PC-3 (cell line): ENCODE measurements at regions of chr2 and their contacts with region 1.

Region 1: DNA sequence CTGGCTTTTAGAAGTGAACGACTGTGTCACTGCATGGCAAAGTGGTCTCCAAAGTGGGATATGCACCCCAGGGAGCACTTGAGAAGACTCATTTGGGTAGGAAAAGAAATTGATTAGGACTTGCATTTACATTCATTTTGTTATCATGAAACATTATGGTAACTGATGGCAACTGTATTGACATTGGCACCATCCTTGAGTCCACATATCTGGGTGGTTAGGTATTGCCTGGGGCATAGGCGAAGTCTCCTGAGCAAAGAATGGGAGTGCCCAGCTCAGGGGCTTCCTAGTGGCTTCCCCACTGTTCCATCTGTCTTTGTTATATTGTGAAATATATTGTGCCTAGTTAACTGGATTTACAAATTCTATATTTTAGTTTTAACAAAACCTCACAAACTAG is 29.2 kb downstream of the SPATS2L start:
- DNase-seq: peak; percentile 90
- ATAC-seq: peak; percentile 89
- H3K4me3 ChIP-seq: no peak overlapping the region
- H3K27ac ChIP-seq: peak overlapping the region; percentile 83
- H3K4me1 ChIP-seq: peaks cover 30% of the 10 kb centered on the region
- H3K27me3 ChIP-seq: no peaks in the 10 kb centered on the region
- CTCF ChIP-seq: no peak

Region 2: DNA sequence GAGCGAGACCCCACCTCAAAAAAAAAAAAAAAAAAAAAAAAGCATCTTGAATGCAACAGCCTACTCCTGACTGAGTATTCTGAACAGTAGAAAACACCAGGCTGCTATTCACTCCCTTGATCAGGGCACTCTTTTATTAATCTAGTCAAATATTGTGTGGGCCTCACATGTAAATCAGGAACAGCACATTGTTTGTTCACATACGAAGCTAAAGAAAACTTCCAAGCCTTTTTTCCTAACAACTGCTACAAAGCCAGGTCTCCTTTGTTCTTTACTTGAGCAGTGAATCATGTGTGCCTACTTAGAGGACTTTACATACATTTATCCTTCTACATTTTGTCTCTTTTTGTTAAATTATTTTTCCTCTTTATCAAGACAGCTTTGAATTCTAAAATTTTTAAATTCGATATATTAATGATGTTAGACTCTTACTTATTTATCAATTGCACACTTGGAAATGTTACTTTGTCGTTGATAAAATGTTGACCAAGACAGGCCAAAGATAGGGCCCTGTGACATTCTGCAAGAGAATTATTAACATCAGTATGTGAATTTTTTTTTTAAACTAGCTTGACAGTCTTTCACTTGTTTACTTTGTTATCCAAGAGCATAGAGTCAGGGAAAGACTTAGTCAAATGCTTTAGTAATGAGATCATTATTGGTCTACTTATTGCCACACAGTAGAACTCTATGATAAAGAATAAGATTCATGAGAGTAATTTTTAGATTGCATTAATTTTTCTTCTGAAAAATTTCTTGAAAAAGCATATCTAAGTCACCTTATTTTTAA is 15.9 kb before region 1 on chr2:
- CTCF ChIA-PET with region 1: no interaction called
- POLR2A ChIA-PET with region 1: no interaction called
- intact Hi-C with region 1: loop called (anchors 2 kb)
- DNase-seq: peak; percentile 78
- ATAC-seq: peak; percentile 43
- H3K4me3 ChIP-seq: peak overlapping the region; percentile 16
- H3K27ac ChIP-seq: peak overlapping the region; percentile 92
- H3K4me1 ChIP-seq: peaks cover 60% of the 10 kb centered on the region
- H3K27me3 ChIP-seq: no peaks in the 10 kb centered on the region
- CTCF ChIP-seq: no peak

Region 3: GRCh38 chr2:200483729-200484198 is 148.1 kb after region 1 on chr2:
- CTCF ChIA-PET with region 1: no interaction called
- POLR2A ChIA-PET with region 1: no interaction called
- intact Hi-C with region 1: no loop called
- DNase-seq: peak; percentile 85
- ATAC-seq: peak; percentile 64
- H3K4me3 ChIP-seq: no peak overlapping the region
- H3K27ac ChIP-seq: no peak overlapping the region
- H3K4me1 ChIP-seq: peaks cover 47% of the 10 kb centered on the region
- H3K27me3 ChIP-seq: no peaks in the 10 kb centered on the region
- CTCF ChIP-seq: peak; percentile 88